Psoas muscle (tissue), 8 donors: ENCODE measurements at regions of chr15 and their contacts with region 1.

Region 1: GRCh38 chr15:74540761-74541493 is at the start of gene ARID3B:
- DNase-seq: peak; percentile 98 to 99
- ATAC-seq: peak; percentile 96 to 98 (median 98)
- H3K4me3 ChIP-seq: peak within 1 kb of the TSS; percentile 93
- H3K27ac ChIP-seq: peak within 1 kb of the TSS; percentile 85
- H3K4me1 ChIP-seq: peaks cover 23% of the 10 kb centered on the region
- H3K27me3 ChIP-seq: no peaks in the 10 kb centered on the region
- CTCF ChIP-seq: no peak
- total RNA-seq, gene ARID3B: 1.8 to 4.7 (median 2.9) TPM

Region 2: GRCh38 chr15:74433592-74434262 is 107.2 kb before region 1 on chr15 and contains the start of gene SEMA7A:
- intact Hi-C with region 1: no loop called
- DNase-seq: peak; percentile 83 to 92
- ATAC-seq: peak; percentile 90 to 94 (median 92)
- H3K4me3 ChIP-seq: peak within 1 kb of the TSS; percentile 90
- H3K27ac ChIP-seq: peak within 1 kb of the TSS; percentile 65
- H3K4me1 ChIP-seq: peaks cover 4% of the 10 kb centered on the region
- H3K27me3 ChIP-seq: peaks cover 0 to 26% (median 6%) of the 10 kb centered on the region in 3 donors
- CTCF ChIP-seq: no peak
- total RNA-seq, gene SEMA7A: 0.71 to 2.0 (median 1.5) TPM

Region 3: DNA sequence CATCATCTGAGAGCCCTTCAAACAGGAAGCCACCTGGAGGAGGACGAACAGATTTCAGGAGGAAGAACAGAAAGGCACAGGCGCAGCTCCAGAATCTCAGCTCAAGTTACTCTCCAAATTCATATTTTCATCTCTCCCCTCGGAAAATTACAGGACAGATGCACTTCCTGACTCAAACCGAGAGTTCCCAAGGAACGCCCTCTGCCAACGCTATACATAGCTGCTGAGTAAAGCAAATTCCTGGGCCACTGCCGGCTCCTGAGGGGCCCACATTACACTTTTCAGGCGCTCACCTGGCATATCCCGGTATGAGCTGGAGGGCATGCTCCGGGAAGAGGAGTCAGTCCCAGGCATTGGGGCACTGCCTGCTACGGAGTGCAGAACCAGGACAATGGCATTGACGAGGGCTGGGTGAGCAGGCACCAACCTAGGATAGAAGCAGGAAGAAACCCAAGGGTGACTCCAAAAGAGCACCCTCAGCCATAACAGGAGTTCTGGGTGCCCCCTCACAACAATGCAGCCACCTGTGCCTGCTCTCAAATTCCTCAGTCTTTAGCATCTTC is 91.2 kb before region 1 on chr15:
- intact Hi-C with region 1: no loop called
- DNase-seq: no peak
- ATAC-seq: no peak
- H3K4me3 ChIP-seq: no peak overlapping the region
- H3K27ac ChIP-seq: no peak overlapping the region
- H3K4me1 ChIP-seq: no peaks in the 10 kb centered on the region
- H3K27me3 ChIP-seq: no peaks in the 10 kb centered on the region
- CTCF ChIP-seq: no peak

Region 4: DNA sequence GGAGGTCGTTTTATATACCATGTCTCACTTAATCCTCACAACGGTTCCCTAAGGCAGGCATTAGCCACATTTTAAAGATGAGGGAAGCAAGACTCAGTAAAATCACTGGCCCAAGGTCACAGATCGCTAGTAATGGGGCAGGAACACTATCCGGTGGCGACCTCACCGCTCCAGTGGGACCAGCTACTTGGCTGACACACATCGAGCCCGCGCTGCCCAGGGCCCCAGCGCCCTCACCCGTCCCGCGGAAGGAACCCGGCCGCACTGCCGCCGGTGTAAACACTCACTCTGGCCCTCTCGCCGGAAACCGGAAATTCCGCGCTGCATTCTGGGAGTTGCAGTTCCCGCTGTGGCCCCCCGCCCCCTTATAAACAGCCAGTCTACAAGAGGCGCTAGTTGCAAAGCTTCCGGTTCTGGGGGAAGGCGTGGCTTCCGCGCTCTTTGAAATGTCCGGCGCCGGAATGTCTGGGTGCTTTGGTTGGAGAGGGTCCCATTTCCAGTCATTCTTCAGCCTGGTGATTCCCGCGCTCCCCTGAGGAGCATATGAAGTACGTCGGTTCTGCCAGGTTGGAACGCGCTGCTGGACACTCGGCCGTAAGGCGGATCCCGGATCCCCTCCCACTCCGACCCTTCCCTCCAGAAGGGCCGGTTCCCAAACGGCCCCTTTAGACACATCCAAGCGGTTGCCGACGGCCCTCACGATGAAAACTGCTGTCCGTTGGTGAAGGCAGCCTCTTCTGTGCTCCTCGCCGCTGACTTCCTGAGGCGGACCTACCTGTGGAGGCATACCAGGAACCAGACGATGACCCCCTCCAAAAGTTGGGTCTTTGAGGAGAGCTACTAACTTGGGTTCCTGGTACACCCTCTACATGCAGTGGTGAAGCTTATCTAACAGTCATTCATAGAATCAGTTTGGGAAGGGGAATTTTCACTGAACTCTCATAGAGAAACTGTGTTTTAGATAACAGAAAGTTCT is 79.8 kb before region 1 on chr15 and contains the start of gene UBL7:
- intact Hi-C with region 1: loop called (anchors 2 to 10 kb)
- DNase-seq: peak; percentile 98
- ATAC-seq: peak; percentile 98 to 99 (median 98)
- H3K4me3 ChIP-seq: peak within 1 kb of the TSS; percentile 96
- H3K27ac ChIP-seq: peak within 1 kb of the TSS; percentile 92
- H3K4me1 ChIP-seq: peaks cover 12% of the 10 kb centered on the region
- H3K27me3 ChIP-seq: no peaks in the 10 kb centered on the region
- CTCF ChIP-seq: no peak
- total RNA-seq, gene UBL7: 52.3 to 72.7 (median 59.7) TPM

Region 5: GRCh38 chr15:74584779-74585178 is 43.9 kb after region 1 on chr15:
- intact Hi-C with region 1: no loop called
- DNase-seq: no peak
- ATAC-seq: no peak
- H3K4me3 ChIP-seq: no peak overlapping the region
- H3K27ac ChIP-seq: no peak overlapping the region
- H3K4me1 ChIP-seq: no peaks in the 10 kb centered on the region
- H3K27me3 ChIP-seq: no peaks in the 10 kb centered on the region
- CTCF ChIP-seq: no peak

Region 6: GRCh38 chr15:74615508-74616365 is 74.8 kb after region 1 on chr15 and contains the start of gene CLK3:
- intact Hi-C with region 1: loop called (anchors 1 to 5 kb)
- DNase-seq: peak; percentile 97 to 98
- ATAC-seq: peak; percentile 88 to 90 (median 90)
- H3K4me3 ChIP-seq: peak within 1 kb of the TSS; percentile 99
- H3K27ac ChIP-seq: peak within 1 kb of the TSS; percentile 100
- H3K4me1 ChIP-seq: peaks cover 38% of the 10 kb centered on the region
- H3K27me3 ChIP-seq: no peaks in the 10 kb centered on the region
- CTCF ChIP-seq: no peak
- total RNA-seq, gene CLK3: 40.9 to 57.5 (median 46.5) TPM

Region 7: GRCh38 chr15:74680456-74680855 is 139.5 kb after region 1 on chr15:
- intact Hi-C with region 1: no loop called
- DNase-seq: no peak
- ATAC-seq: no peak
- H3K4me3 ChIP-seq: no peak overlapping the region
- H3K27ac ChIP-seq: no peak overlapping the region
- H3K4me1 ChIP-seq: no peaks in the 10 kb centered on the region
- H3K27me3 ChIP-seq: no peaks in the 10 kb centered on the region
- CTCF ChIP-seq: no peak